ENCODE measurements at regions of chr22 and their contacts with region 1.

Region 1: DNA sequence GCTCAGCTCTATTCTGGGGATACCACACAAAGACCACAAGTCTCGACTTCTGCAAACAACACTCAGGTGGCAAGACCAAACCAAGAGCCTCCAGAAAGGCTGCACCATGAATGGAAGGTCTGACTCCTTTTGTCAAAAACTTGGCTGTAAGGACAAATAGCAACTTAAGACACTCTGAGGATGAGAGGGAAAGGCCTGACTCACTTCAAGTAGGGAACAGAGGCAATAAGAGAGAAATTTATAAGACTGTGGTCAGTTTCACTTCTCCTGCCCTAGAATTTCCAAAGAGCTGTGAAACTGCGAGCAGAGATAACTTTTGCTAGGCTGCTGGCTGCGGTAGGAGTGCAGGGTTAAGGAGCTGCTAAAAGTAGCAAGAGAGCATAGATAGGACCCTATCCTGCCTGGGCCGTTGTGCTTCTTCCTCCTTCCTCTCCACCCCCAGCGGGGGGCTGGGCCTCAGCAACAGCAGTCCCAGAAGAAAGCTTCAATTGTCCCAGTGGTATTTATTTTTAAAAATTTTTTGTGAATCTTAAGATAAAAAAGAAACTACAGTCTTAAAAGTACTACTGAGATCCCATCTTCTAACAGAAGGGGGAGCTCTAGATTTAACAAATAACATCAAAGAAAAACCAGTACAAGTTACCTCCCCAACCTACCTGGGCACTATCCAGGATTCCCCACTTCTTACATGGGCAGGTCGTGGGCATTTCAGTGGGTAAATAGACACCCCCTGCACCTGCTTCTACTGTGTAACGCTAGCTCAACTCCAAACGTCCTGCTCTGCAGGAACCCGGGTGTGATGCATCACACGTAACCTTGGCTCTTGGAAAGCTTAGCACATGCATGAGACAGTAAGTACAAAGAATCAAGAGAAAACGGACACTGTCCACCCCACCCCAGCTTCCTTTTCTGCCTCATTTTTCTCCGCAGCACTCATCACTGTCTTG is 66.4 kb downstream of the SGSM3 start:
- DNase-seq: peak; percentile 50
- ATAC-seq: peak; percentile 74
- H3K4me3 Mint-ChIP-seq: peak overlapping the region; percentile 72
- H3K27ac Mint-ChIP-seq: peak overlapping the region; percentile 91
- H3K4me1 Mint-ChIP-seq: peaks cover 92% of the 10 kb centered on the region
- H3K27me3 Mint-ChIP-seq: no peaks in the 10 kb centered on the region
- CTCF ChIP-seq: no peak

Region 2: DNA sequence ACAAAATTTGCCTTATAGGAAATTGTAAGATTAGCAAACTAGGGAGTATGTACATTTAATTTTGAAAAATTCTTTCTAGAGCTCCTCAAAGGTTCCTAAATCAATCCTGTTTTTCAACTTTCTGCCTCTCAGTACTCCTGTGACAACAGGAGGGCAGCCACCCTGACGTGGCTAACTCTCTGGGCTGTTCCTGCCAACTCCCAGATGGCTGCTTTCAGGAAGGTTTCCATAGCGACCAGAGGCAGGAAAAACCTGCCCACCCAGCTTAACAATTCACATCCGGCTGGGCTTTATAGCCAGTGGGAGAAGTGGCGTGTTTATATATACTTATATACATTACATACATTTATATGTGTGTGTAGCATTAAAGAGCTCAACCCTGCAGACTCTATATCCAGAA is 39.9 kb before region 1 on chr22:
- CTCF ChIA-PET with region 1: interaction called, 7 read pairs
- POLR2A ChIA-PET with region 1: interaction called, 6 read pairs
- intact Hi-C with region 1: loop called (anchors 1 kb)
- DNase-seq: no peak
- ATAC-seq: no peak
- H3K4me3 Mint-ChIP-seq: peak overlapping the region; percentile 28
- H3K27ac Mint-ChIP-seq: peak overlapping the region; percentile 80
- H3K4me1 Mint-ChIP-seq: peaks cover 86% of the 10 kb centered on the region
- H3K27me3 Mint-ChIP-seq: no peaks in the 10 kb centered on the region
- CTCF ChIP-seq: no peak

Region 3: GRCh38 chr22:40487663-40488249 is 51.0 kb after region 1 on chr22:
- CTCF ChIA-PET with region 1: interaction called, 59 read pairs
- POLR2A ChIA-PET with region 1: interaction called, 4 read pairs
- intact Hi-C with region 1: loop called (anchors 1 kb)
- DNase-seq: no peak
- ATAC-seq: no peak
- H3K4me3 Mint-ChIP-seq: no peak overlapping the region
- H3K27ac Mint-ChIP-seq: peak overlapping the region; percentile 5
- H3K4me1 Mint-ChIP-seq: peaks cover 35% of the 10 kb centered on the region
- H3K27me3 Mint-ChIP-seq: no peaks in the 10 kb centered on the region
- CTCF ChIP-seq: peak; percentile 53

Region 4: DNA sequence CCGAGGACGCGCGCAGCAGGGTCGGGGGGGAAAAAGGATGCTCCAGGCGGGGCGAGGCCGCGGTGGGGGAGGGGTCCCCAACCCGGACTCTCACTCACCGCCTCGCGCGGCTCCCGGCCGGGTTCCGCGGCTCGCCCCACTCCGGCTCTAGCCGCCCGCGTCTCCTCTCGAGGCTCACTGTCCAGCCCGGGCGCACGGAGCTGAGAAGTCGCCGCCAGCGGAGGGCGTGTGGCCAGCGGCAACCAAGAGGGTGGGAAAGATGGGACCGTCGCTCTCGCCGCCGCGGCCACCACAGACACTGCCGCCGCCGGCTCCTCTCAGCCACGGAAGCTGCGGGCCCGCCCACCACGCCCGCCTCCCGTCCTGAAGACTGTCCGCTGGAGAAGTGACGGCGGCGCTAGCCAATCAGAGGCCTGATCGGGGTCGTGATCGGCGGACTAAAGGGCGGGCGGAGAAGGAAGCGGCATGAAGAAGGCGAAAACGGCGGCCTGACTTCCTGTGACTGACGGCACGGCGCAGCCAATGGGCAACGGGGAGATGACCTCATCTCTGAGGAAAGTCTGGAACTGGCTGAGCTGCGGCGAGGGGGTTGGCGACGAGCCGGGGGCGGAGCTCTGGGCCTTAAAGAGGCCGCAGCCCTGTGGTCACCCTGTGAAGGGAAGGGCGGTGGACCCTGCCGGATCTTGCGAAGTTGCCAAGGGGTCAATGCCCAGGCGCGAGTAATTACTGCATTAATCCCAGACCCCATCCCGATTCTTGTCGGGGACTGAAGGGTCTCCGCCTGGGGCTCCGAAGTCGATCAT is 199.8 kb after region 1 on chr22 and contains the start of gene MRTFA:
- CTCF ChIA-PET with region 1: interaction called, 4 read pairs
- POLR2A ChIA-PET with region 1: interaction called, 16 read pairs
- intact Hi-C with region 1: loop called (anchors 2 kb)
- DNase-seq: peak; percentile 95
- ATAC-seq: peak; percentile 93
- H3K4me3 Mint-ChIP-seq: peak within 1 kb of the TSS; percentile 98
- H3K27ac Mint-ChIP-seq: peak within 1 kb of the TSS; percentile 95
- H3K4me1 Mint-ChIP-seq: peaks cover 45% of the 10 kb centered on the region
- H3K27me3 Mint-ChIP-seq: no peaks in the 10 kb centered on the region
- CTCF ChIP-seq: no peak
- total RNA-seq, gene MRTFA: 99.4 and 115 TPM in 2 replicates

Region 5: DNA sequence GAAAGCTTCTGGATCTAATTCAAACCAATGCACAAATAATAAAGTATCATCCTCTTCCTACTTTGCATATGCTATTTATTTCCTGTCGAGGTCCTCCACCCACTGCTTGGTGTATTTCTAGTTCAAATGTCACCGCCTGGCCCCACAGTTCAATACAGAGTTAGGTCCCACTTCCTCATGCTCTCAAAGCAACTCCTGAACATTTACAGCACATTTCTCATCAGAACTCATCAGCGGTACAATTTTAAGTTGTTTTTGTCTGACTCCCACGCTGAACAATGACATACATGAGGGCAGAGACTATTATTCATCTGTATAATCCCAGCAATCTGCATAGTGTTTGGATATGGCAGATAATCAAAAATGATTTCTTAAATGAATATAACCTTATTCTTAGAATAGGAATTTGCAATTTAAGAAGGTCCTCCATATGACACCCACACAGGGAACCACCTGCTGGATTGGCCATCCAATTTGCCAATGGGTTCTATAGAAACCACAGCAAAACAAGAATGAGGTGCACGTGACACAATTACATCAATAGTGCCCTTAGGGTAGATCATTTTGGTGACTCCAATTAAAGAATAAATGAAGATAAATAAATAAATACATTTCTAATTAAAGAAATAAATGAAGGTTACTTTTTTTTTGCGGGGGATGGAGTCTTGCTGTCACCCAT is 328.1 kb after region 1 on chr22:
- CTCF ChIA-PET with region 1: interaction called, 9 read pairs
- POLR2A ChIA-PET with region 1: interaction called, 3 read pairs
- intact Hi-C with region 1: loop called (anchors 1 kb)
- DNase-seq: no peak
- ATAC-seq: peak; percentile 89
- H3K4me3 Mint-ChIP-seq: peak overlapping the region; percentile 69
- H3K27ac Mint-ChIP-seq: peak overlapping the region; percentile 95
- H3K4me1 Mint-ChIP-seq: peaks cover 46% of the 10 kb centered on the region
- H3K27me3 Mint-ChIP-seq: no peaks in the 10 kb centered on the region
- CTCF ChIP-seq: no peak